ENCODE measurements at regions of chr5 and their contacts with region 1.

Region 1: DNA sequence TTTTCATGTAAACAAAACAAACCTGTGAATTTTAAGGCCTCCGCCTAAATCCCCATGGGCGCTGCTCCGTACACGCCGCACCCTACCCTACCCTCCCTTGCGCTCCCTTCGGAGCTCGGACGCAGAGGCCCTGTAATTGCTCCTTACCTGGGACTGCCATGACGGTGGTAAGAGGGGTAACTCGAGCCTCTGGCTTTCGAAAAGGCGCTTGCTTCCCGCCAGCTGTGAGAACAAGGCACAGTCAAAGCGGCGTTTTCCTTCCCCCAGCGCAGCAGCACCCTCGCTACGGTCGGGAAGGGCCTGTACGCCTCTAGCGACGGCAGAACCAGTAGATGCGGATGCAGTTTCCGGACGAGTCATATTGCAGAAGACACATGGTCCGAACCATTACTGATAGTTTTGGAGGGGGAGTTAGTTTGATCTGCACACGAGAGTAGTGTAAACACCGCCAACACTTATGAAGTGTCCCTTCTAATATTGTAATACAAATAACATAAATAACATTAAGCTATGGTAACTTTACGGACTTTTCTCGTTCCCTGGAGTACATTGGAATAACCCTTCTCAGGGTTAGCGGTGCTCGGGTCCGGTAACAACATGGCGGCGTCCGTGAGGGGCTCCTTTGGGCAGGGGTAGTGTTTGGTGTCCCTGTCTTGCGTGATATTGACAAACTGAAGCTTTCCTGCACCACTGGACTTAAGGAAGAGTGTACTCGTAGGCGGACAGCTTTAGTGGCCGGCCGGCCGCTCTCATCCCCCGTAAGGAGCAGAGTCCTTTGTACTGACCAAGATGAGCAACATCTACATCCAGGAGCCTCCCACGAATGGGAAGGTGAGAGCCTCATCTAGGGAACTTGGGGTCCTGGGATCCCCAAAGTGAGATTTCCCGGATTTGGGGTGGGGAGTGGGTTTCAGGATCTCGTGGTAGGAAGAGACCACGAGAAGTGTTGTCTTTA is at the starts of genes CWC27 and SREK1IP1:
- DNase-seq: peak; percentile 94
- H3K4me3 ChIP-seq: peak within 1 kb of the TSS; percentile 70
- H3K27ac ChIP-seq: peak within 1 kb of the TSS; percentile 98
- H3K4me1 ChIP-seq: peaks cover 22% of the 10 kb centered on the region
- H3K27me3 ChIP-seq: no peaks in the 10 kb centered on the region
- CTCF ChIP-seq: no peak
- total RNA-seq, gene CWC27: 38.0 and 43.3 TPM in 2 replicates
- total RNA-seq, gene SREK1IP1: 31.7 and 32.3 TPM in 2 replicates

Region 2: GRCh38 chr5:64634997-64635686 is 133.5 kb before region 1 on chr5:
- CTCF ChIA-PET with region 1: no interaction called
- POLR2A ChIA-PET with region 1: no interaction called
- intact Hi-C with region 1: loop called (anchors 5 kb)
- DNase-seq: peak; percentile 83
- H3K4me3 ChIP-seq: no peak overlapping the region
- H3K27ac ChIP-seq: no peak overlapping the region
- H3K4me1 ChIP-seq: peaks cover 7% of the 10 kb centered on the region
- H3K27me3 ChIP-seq: no peaks in the 10 kb centered on the region
- CTCF ChIP-seq: peak; percentile 84

Region 3: DNA sequence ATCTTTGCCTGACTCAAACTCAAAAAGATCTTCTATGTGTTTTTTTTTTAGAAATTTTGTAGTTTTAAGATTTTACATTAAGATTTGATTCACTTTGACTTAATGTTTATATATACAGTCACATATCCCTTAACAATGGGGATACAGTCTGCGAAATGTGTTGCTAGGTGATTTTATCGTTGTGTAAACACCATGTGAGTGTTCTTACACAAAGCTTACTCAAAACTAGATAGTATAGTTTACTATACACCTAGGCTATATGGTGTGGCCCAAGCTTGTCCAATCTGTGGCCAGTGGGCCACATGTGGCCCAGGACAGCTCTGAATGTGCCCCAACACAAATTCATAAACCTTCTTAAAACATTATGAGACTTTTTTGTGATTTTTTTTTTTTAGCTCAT is 132.0 kb after region 1 on chr5:
- CTCF ChIA-PET with region 1: no interaction called
- POLR2A ChIA-PET with region 1: no interaction called
- intact Hi-C with region 1: no loop called
- DNase-seq: no peak
- H3K4me3 ChIP-seq: no peak overlapping the region
- H3K27ac ChIP-seq: no peak overlapping the region
- H3K4me1 ChIP-seq: no peaks in the 10 kb centered on the region
- H3K27me3 ChIP-seq: no peaks in the 10 kb centered on the region
- CTCF ChIP-seq: no peak

Region 4: DNA sequence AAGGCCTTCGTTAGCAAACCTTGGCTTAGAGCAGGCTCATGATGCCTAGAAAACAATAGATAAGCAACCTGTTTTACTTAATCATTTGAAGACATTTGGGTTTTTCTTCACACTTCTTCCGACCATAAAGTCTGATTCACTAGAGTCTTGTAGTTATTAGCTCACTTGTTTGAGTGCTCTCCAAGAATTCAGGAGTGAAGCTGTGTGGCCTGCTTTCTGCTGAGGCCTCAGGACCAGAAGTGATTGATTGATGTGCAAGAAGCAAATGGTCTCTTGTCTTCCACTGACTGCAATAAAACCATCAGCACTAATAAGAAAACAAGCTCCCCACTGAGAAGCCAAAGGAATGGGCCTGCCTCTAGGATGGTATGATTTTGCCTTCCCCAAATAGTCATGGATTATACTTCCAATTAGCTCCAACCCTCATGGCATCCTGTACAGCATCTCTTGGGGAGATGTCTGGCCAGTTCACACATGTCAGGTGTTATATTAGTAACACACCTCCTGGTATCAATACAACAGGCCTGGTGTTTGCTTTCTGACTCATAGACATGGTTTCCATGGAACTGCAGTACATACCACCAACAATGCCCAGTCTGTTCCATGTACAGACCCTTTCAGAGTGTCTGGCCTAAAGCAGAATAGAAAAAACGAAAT is 317.7 kb after region 1 on chr5:
- CTCF ChIA-PET with region 1: no interaction called
- POLR2A ChIA-PET with region 1: no interaction called
- intact Hi-C with region 1: no loop called
- DNase-seq: no peak
- H3K4me3 ChIP-seq: no peak overlapping the region
- H3K27ac ChIP-seq: no peak overlapping the region
- H3K4me1 ChIP-seq: no peaks in the 10 kb centered on the region
- H3K27me3 ChIP-seq: no peaks in the 10 kb centered on the region
- CTCF ChIP-seq: no peak

Region 5: DNA sequence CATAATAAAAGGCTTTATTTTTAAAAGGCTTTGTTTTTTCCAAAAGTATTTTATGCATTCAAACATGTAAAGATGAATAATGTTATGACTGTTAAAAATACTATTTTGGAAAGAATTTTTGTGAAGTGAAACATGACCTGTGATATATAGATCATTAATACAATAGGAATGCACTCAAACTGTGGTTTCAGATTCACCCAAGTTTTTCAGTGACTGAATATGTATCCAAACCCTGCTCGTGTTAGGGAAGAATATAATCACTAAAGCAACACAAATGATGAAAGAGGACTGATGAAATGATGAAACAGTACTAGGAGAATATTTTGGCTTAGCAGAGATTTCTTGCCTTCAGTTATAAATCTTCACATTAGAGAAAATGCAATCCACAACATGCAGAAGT is 435.1 kb after region 1 on chr5:
- CTCF ChIA-PET with region 1: no interaction called
- POLR2A ChIA-PET with region 1: interaction called, 17 read pairs
- intact Hi-C with region 1: no loop called
- DNase-seq: no peak
- H3K4me3 ChIP-seq: no peak overlapping the region
- H3K27ac ChIP-seq: no peak overlapping the region
- H3K4me1 ChIP-seq: no peaks in the 10 kb centered on the region
- H3K27me3 ChIP-seq: no peaks in the 10 kb centered on the region
- CTCF ChIP-seq: no peak

Measured in A673 (cell line).